A549 (cell line): ENCODE measurements at regions of chr1 and their contacts with region 1.

Region 1: GRCh38 chr1:109493805-109494539 is at the start of gene CYB561D1:
- DNase-seq: peak; percentile 52 to 78
- ATAC-seq: peak; percentile 83 to 94
- H3K4me3 ChIP-seq: peak within 1 kb of the TSS; percentile 75
- H3K27ac ChIP-seq: peak within 1 kb of the TSS; percentile 85 to 98
- H3K4me1 ChIP-seq: peaks cover 6% of the 10 kb centered on the region; the same call in 1 of the 3 replicates
- CTCF ChIP-seq: peak; percentile 82
- EP300 ChIP-seq: no peak
- POLR2A ChIP-seq: peak; percentile 66
- RAD21 ChIP-seq: peak; percentile 16 to 34; a peak in 3 of 5 replicates
- polyA plus RNA-seq, gene CYB561D1: 4.0 and 4.9 TPM in 2 replicates

Region 2: GRCh38 chr1:109369167-109369746 is 124.7 kb before region 1 on chr1:
- CTCF ChIA-PET with region 1: no interaction called
- POLR2A ChIA-PET with region 1: no interaction called
- DNase-seq: no peak
- ATAC-seq: no peak
- H3K4me3 ChIP-seq: no peak overlapping the region
- H3K27ac ChIP-seq: no peak overlapping the region
- H3K4me1 ChIP-seq: no peaks in the 10 kb centered on the region
- CTCF ChIP-seq: no peak
- EP300 ChIP-seq: no peak
- POLR2A ChIP-seq: no peak
- RAD21 ChIP-seq: no peak

Region 3: DNA sequence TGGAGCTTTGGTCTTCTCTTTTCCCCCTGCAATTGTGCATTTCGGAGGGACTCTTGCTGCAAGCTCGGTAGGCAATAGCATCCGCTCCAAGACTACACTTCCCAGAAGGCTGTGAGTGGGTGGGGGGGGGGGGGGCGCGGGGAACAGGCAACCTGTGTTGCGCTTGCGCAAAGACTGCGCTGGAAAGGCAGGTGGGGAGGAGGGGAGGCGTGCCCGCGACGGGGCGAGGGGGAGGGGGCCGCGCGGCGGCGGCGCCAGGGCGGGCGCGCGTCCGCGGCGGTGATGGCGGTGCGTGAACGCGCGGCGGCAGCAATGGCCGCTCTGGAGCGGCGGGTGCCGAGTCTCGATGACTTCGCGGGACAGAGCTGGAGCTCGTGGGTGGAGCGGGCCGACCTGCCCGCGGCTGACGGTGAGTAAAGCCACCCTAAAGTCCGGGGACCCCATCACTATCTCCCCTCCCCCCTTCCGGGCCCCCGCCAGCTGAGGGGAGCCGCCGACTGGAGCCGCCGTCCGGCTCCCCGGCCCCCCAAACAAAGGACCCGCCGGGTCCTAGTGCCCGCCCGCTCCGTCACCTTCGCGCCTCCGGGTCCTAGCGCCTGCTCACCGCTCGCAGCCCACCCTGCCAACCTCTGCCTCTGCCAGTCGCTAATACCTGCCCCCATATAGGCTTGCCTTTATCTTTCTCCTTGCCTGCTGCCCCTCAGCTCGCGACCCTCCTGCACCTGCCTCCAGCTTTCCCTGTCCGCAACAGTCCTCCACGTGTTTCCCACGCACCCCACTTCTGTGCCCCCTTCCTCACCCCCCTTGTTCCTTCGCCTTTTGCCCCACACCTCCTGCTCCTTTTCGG is 10.1 kb before region 1 on chr1 and contains the start of gene ATXN7L2:
- CTCF ChIA-PET with region 1: interaction called, 33 read pairs
- POLR2A ChIA-PET with region 1: interaction called, 9 read pairs
- DNase-seq: peak; percentile 85 to 92
- ATAC-seq: peak; percentile 80 to 82
- H3K4me3 ChIP-seq: peak within 1 kb of the TSS; percentile 60
- H3K27ac ChIP-seq: peak within 1 kb of the TSS; percentile 96 to 99
- H3K4me1 ChIP-seq: peaks cover 6% of the 10 kb centered on the region; the same call in 2 of the 3 replicates
- CTCF ChIP-seq: no peak
- EP300 ChIP-seq: no peak
- POLR2A ChIP-seq: peak; percentile 92
- RAD21 ChIP-seq: no peak
- polyA plus RNA-seq, gene ATXN7L2: 0.97 and 1.2 TPM in 2 replicates

Region 4: GRCh38 chr1:109509176-109510134 is 15.5 kb after region 1 on chr1 and contains the start of gene AMIGO1:
- CTCF ChIA-PET with region 1: interaction called, 101 read pairs
- POLR2A ChIA-PET with region 1: interaction called, 3 read pairs
- DNase-seq: peak; percentile 9 to 35
- ATAC-seq: peak; percentile 67
- H3K4me3 ChIP-seq: peak within 1 kb of the TSS; percentile 63
- H3K27ac ChIP-seq: peak within 1 kb of the TSS; percentile 68 to 93
- H3K4me1 ChIP-seq: peaks cover 4% of the 10 kb centered on the region; the same call in 1 of the 3 replicates
- CTCF ChIP-seq: no peak
- EP300 ChIP-seq: no peak
- POLR2A ChIP-seq: no peak
- RAD21 ChIP-seq: no peak
- polyA plus RNA-seq, gene AMIGO1: 0.43 and 0.85 TPM in 2 replicates

Region 5: DNA sequence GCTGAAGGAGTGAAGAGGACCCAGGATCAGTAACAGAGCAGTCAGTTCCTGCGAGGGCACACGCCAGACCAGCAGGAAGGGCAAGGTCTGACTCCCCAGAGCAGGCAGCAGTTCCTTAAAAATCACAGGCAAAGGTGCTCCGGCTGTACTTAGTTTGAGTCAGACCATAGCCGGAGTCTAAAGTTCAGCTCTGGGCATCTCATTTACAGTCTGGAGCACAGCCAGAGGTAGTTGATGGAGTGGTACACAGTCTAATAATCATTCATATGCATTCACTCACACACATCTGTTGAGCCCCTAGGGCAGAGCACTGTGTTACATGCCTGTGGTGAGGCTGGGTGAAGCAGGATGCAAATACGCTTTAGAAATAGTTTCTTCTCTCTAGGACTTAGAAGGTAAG is 22.9 kb after region 1 on chr1:
- CTCF ChIA-PET with region 1: interaction called, 749 read pairs
- POLR2A ChIA-PET with region 1: no interaction called
- DNase-seq: no peak
- ATAC-seq: peak in 1 of 2 experiments; percentile 21; a peak in 2 of 6 replicates
- H3K4me3 ChIP-seq: no peak overlapping the region
- H3K27ac ChIP-seq: no peak overlapping the region
- H3K4me1 ChIP-seq: no peaks in the 10 kb centered on the region
- CTCF ChIP-seq: no peak
- EP300 ChIP-seq: no peak
- POLR2A ChIP-seq: no peak
- RAD21 ChIP-seq: no peak